Activated CD8-positive, alpha-beta T cell treated with anti-CD3 and anti-CD28 coated beads, Interleukin-2, amount 10 ng/mL, durations not matched to agents 7 days and 5 days (primary cell): ENCODE measurements at regions of chr3 and their contacts with region 1.

Region 1: DNA sequence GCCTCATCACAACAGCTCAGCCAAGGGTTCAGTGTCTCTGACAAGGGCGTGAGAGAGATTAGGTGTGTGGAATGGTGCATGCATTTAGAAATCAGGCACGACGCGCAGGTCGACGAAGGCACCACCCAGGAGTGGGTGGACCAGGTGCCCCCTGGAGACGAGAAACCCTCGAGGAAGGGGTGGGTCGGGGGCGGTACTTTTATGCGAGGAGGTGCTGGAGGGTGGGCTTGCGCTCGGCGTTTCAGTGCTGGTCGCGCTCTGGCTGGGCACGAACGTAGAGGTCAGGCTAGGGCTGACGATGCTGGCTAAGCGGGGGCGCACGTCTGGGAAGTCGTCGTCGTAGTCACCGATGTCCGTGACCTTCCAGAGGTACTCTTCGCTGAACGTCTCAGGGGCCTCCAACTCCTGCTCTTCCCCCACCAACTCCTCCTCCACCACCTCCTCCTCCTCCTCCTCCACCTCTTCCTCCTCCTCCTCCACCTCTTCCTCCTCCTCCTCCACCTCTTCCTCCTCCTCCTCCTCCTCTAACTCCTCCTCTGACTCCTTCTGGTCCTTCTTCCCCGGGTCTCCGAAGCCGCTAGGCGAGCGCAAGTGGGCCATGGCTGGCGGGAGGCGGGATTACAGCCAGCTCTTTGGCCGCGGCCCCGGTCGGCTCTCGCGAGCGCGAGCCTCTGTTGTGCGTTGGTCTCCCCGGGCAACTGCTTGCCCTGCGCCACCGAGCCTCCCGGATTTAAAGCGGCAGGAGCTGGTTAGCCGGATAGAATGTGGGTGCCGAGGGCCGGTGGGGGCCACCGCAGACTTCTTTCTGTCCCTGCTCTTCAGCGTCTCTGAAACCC is at the start of gene ERICH6:
- DNase-seq: peak; percentile 92
- ATAC-seq: peak; percentile 95
- H3K4me3 Mint-ChIP-seq: peak within 1 kb of the TSS; percentile 95
- H3K27ac Mint-ChIP-seq: peak within 1 kb of the TSS; percentile 99
- H3K4me1 Mint-ChIP-seq: peaks cover 32% of the 10 kb centered on the region
- H3K27me3 Mint-ChIP-seq: peaks cover 5% of the 10 kb centered on the region
- total RNA-seq, gene ERICH6: 0.21 to 0.60 TPM

Region 2: GRCh38 chr3:150546226-150547044 is 157.1 kb before region 1 on chr3 and contains the starts of genes EIF2A and SERP1:
- CTCF ChIA-PET with region 1: no interaction called
- POLR2A ChIA-PET with region 1: interaction called, 19 read pairs
- DNase-seq: peak; percentile 99
- ATAC-seq: peak; percentile 93
- H3K4me3 Mint-ChIP-seq: peak within 1 kb of the TSS; percentile 94
- H3K27ac Mint-ChIP-seq: peak within 1 kb of the TSS; percentile 92
- H3K4me1 Mint-ChIP-seq: peaks cover 51% of the 10 kb centered on the region
- H3K27me3 Mint-ChIP-seq: no peaks in the 10 kb centered on the region
- total RNA-seq, gene EIF2A: 77.0 to 89.0 TPM
- total RNA-seq, gene SERP1: 83.4 to 87.3 TPM

Region 3: GRCh38 chr3:150681057-150681456 is 22.5 kb before region 1 on chr3:
- CTCF ChIA-PET with region 1: interaction called, 3 read pairs
- POLR2A ChIA-PET with region 1: interaction called, 11 read pairs
- DNase-seq: peak; percentile 35
- ATAC-seq: peak; percentile 94
- H3K4me3 Mint-ChIP-seq: peak overlapping the region; percentile 20
- H3K27ac Mint-ChIP-seq: peak overlapping the region; percentile 63
- H3K4me1 Mint-ChIP-seq: peaks cover 29% of the 10 kb centered on the region
- H3K27me3 Mint-ChIP-seq: no peaks in the 10 kb centered on the region

Region 4: GRCh38 chr3:150691414-150692040 is 12.0 kb before region 1 on chr3:
- CTCF ChIA-PET with region 1: no interaction called
- POLR2A ChIA-PET with region 1: no interaction called
- DNase-seq: no peak
- ATAC-seq: no peak
- H3K4me3 Mint-ChIP-seq: no peak overlapping the region
- H3K27ac Mint-ChIP-seq: no peak overlapping the region
- H3K4me1 Mint-ChIP-seq: no peaks in the 10 kb centered on the region
- H3K27me3 Mint-ChIP-seq: peaks cover 2% of the 10 kb centered on the region